Activated CD4-positive, alpha-beta T cell treated with anti-CD3 and anti-CD28 coated beads for 36 hours (primary cell): ENCODE measurements at regions of chr10 and their contacts with region 1.

Region 1: DNA sequence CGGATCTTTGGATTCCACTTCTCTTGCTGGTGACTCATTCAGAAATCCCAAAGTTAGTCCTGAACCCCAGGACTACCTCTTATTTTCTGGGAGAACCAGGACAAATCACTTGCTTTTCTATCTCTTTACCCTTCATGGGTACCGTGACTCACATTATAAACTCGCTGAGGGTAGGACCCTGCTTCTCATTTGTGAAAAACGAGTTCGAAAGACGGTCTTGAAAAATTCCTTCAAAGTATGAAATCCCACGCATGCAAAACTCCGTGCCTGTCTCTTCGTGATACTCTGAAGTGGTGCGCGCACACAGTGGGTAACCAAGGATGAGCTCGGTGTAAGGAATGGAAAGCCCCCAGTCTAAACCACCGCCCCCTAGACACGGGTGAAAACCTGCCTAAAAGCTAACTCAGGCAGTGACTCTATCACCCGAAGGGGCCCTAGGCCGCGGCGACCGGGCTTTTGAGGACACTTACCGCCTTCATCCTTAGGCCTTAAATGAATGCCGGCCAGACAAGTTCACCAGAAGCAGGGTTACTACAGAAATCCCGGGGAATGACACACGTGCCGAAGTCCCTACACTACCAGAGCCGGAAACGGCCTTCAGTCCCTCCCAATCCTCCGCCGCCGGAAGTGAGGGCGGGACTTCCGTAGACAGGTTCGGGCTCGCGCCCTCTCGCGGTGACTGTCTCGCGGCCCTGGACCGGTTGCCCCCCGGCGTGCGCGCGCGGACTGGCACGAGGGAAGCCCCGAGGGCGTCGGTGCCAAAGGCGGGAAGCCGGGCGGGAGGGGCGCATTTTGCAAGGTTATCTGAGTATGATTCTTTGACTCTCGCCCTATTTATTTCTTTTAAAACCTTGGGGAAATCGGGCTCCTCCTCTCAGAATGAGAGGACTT is at the start of gene NOC3L:
- DNase-seq: peak; percentile 98
- ATAC-seq: peak; percentile 98
- H3K4me3 Mint-ChIP-seq: peak within 1 kb of the TSS; percentile 96
- H3K27ac Mint-ChIP-seq: peak within 1 kb of the TSS; percentile 93
- H3K4me1 Mint-ChIP-seq: peaks cover 27% of the 10 kb centered on the region
- H3K27me3 Mint-ChIP-seq: peaks cover 8% of the 10 kb centered on the region
- total RNA-seq, gene NOC3L: 50.7 to 53.7 TPM

Region 2: GRCh38 chr10:93496322-93497041 is 866.1 kb before region 1 on chr10 and contains the start of gene CEP55:
- CTCF ChIA-PET with region 1: interaction called, 3 read pairs
- POLR2A ChIA-PET with region 1: no interaction called
- intact Hi-C with region 1: loop called in 1 of 2 experiments (anchors 2 kb)
- DNase-seq: peak; percentile 98
- ATAC-seq: peak; percentile 99
- H3K4me3 Mint-ChIP-seq: peak within 1 kb of the TSS; percentile 78
- H3K27ac Mint-ChIP-seq: peak within 1 kb of the TSS; percentile 84
- H3K4me1 Mint-ChIP-seq: peaks cover 25% of the 10 kb centered on the region
- H3K27me3 Mint-ChIP-seq: peaks cover 2% of the 10 kb centered on the region
- total RNA-seq, gene CEP55: 67.8 to 76.0 TPM

Region 3: DNA sequence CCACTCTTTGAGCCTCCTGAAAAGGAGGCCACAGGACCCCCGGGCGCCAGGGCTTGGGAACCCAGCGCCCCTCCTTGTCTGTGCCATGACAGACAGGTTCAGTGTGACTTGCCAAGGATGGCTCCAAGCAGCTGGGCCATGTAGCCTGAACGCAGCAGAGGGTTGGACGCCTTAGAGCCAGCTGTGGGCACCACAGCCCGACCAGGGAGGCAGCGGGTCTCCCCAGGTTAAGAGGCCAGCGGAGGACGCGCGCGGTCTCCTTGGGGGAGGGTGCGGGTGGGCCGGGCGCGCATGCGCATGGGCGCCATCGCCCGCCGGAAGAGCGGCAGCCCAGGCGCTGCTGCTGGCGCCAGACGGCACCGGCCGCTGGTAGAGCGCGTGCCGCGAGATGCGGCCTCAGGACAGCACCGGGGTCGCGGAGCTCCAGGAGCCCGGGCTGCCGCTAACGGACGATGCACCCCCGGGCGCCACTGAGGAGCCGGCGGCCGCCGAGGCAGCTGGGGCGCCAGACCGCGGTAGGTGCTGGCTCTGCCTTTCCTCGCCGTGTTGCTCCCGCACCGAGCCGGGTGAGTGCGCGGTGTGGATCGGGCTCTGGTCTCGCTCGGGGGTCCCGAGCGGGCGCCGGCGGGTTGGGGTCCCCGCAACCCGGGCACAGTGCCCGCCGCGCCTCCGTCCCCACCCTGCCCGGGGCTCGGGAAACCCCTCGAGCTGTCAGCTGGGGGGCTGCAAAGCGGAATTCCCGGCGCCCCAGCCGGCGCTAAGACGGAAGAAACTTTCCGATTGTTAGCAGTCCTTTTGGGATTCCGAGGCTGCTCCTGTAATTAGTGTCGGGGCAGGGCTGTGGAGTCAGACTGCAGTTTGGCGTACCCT is 468.7 kb before region 1 on chr10 and contains the start of gene SLC35G1:
- CTCF ChIA-PET with region 1: no interaction called
- POLR2A ChIA-PET with region 1: interaction called, 3 read pairs
- intact Hi-C with region 1: loop called in 1 of 2 experiments (anchors 2 kb)
- DNase-seq: peak; percentile 84
- ATAC-seq: peak; percentile 94
- H3K4me3 Mint-ChIP-seq: peak within 1 kb of the TSS; percentile 77
- H3K27ac Mint-ChIP-seq: peak within 1 kb of the TSS; percentile 72
- H3K4me1 Mint-ChIP-seq: peaks cover 37% of the 10 kb centered on the region
- H3K27me3 Mint-ChIP-seq: peaks cover 14% of the 10 kb centered on the region
- total RNA-seq, gene SLC35G1: 3.6 to 4.1 TPM

Region 4: GRCh38 chr10:94439275-94439861 is 76.8 kb after region 1 on chr10:
- CTCF ChIA-PET with region 1: interaction called, 6 read pairs
- POLR2A ChIA-PET with region 1: no interaction called
- intact Hi-C with region 1: loop called in 1 of 2 experiments (anchors 1 kb)
- DNase-seq: no peak
- ATAC-seq: no peak
- H3K4me3 Mint-ChIP-seq: no peak overlapping the region
- H3K27ac Mint-ChIP-seq: no peak overlapping the region
- H3K4me1 Mint-ChIP-seq: no peaks in the 10 kb centered on the region
- H3K27me3 Mint-ChIP-seq: peaks cover 18% of the 10 kb centered on the region

Region 5: DNA sequence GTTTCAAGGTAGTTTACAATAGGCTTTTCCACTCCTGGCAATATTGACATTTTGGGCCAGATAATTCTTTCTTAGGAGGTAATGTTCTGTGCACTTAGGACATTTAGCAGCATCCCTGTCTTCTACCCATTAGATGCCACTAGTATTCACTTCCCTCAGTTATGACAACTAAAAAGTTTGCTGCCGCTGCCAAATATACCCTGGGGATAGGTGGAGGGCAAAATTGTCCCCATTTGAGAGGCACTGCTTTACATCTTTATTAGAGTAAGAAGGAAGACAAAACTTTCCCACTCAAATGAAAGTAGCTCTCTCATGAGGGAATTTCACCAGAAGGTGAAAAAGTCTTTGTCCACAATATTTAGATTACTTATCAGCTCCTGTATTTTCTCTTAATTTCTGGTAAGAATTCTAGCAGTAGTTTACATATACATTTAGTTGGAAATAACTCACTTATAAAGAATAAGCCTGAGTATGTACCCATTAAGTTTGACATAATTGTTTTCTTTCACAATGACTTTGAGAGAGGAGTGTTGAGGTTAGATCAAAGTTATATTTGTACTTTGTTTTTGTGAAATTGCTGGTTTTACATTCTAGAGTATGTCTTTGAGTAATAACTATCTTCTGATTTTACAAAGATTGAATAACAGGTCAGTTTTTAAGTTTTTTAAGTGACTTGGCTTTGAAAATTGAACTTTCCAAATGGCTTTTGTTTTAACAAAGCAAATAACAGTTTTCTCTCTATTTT is 229.0 kb after region 1 on chr10:
- CTCF ChIA-PET with region 1: no interaction called
- POLR2A ChIA-PET with region 1: no interaction called
- intact Hi-C with region 1: loop called in 1 of 2 experiments (anchors 5 kb)
- DNase-seq: no peak
- ATAC-seq: peak; percentile 85
- H3K4me3 Mint-ChIP-seq: peak overlapping the region; percentile 30
- H3K27ac Mint-ChIP-seq: peak overlapping the region; percentile 58
- H3K4me1 Mint-ChIP-seq: peaks cover 17% of the 10 kb centered on the region
- H3K27me3 Mint-ChIP-seq: no peaks in the 10 kb centered on the region

Region 6: GRCh38 chr10:95561182-95562075 is 1198.8 kb after region 1 on chr10 and contains the start of gene SORBS1:
- CTCF ChIA-PET with region 1: no interaction called
- POLR2A ChIA-PET with region 1: no interaction called
- intact Hi-C with region 1: loop called in 1 of 2 experiments (anchors 5 kb)
- DNase-seq: peak; percentile 91
- ATAC-seq: peak; percentile 99
- H3K4me3 Mint-ChIP-seq: peak within 1 kb of the TSS; percentile 85
- H3K27ac Mint-ChIP-seq: no peak within 1 kb of the TSS
- H3K4me1 Mint-ChIP-seq: peaks cover 9% of the 10 kb centered on the region
- H3K27me3 Mint-ChIP-seq: peaks cover 6% of the 10 kb centered on the region
- total RNA-seq, gene SORBS1: 0.69 to 1.0 TPM